Activated CD4-positive, alpha-beta memory T cell treated with anti-CD3 and anti-CD28 coated beads for 36 hours (primary cell): ENCODE measurements at regions of chr4 and their contacts with region 1.

Region 1: DNA sequence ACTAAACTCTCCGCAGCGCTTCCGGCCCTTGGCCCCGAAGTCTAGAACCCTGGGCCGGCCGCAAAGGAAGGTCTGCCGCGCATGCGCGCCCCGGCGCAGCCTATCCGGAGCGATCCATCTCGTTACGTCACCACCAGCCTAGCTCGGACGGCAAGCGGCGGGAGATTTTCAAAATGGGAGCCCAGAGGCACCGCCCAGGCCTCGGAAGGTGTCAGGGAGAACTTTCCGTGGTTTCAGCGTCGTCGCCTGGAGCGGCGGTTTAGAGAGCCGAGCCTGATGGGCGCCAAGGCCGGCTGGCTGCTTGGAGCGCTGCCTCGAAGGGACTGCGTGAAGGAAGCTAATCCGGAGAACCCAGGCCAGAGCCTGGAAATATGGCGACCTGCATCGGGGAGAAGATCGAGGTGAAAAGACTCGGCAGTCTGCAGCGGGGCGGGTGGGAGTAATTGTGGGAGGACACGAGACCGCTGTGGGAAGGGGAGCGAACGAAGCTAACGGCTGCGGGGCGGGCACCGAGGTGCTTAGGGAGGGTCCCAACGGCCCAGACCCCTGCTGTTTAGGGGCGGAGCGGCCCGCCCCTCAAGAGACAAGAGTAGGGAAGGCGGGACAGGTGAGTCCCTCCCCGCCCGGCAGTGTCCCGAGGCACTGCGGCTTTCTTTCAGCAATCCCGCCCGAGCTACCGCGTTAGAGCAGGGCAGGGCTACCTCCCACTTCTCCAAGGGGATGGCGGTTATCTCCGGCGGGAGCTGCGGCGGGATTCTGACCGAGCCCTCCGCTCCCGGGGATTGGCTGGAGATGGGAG is at the start of gene PLK4:
- DNase-seq: peak; percentile 97
- H3K4me3 Mint-ChIP-seq: peak within 1 kb of the TSS; percentile 95
- H3K27ac Mint-ChIP-seq: peak within 1 kb of the TSS; percentile 98
- H3K4me1 Mint-ChIP-seq: peaks cover 14% of the 10 kb centered on the region
- H3K27me3 Mint-ChIP-seq: peaks cover 2% of the 10 kb centered on the region
- total RNA-seq, gene PLK4: 43.5 to 45.6 TPM

Region 2: GRCh38 chr4:127622921-127623656 is 257.9 kb before region 1 on chr4:
- CTCF ChIA-PET with region 1: no interaction called
- POLR2A ChIA-PET with region 1: no interaction called
- intact Hi-C with region 1: loop called (anchors 10 kb)
- DNase-seq: no peak
- H3K4me3 Mint-ChIP-seq: peak overlapping the region; percentile 12
- H3K27ac Mint-ChIP-seq: no peak overlapping the region
- H3K4me1 Mint-ChIP-seq: peaks cover 8% of the 10 kb centered on the region
- H3K27me3 Mint-ChIP-seq: peaks cover 40% of the 10 kb centered on the region

Region 3: DNA sequence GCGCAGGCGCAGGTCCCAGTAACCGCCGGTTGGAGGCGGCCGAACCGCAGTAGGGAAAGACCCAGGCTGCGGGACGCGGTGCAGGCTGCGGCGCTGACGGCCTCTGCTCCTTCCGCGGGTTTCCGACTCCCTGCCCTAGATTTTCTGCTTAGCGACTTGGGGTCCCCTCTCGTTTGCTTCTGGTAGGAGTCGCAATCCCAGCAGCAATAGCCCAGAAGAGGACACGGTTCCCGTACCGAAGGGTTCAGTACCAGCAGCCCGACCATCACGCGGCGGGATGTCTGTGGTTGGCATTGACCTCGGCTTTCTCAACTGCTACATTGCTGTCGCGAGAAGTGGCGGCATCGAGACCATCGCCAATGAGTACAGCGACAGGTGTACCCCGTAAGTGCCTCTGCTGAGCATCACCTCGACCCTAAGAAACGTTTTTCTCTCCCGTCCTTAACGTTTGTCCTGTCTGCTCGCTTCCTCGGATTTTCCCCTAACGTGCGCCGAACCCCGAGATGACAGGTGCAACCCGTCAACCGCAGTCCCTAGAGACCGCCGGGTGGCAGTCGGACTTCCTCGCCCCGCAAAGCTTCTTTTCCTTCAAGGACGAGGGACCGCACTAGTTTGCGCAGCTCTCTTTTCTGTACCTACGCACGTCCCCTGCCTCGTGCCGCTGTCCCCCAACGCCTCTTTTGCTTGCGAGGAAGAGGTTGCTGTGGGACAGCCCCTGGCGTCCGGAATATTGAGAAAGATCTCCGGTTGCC is 98.5 kb before region 1 on chr4 and contains the start of gene HSPA4L:
- CTCF ChIA-PET with region 1: no interaction called
- POLR2A ChIA-PET with region 1: no interaction called
- intact Hi-C with region 1: loop called (anchors 1 kb)
- DNase-seq: no peak
- H3K4me3 Mint-ChIP-seq: peak within 1 kb of the TSS; percentile 79
- H3K27ac Mint-ChIP-seq: peak within 1 kb of the TSS; percentile 49
- H3K4me1 Mint-ChIP-seq: peaks cover 18% of the 10 kb centered on the region
- H3K27me3 Mint-ChIP-seq: peaks cover 51% of the 10 kb centered on the region
- total RNA-seq, gene HSPA4L: 1.9 to 3.0 TPM

Region 4: DNA sequence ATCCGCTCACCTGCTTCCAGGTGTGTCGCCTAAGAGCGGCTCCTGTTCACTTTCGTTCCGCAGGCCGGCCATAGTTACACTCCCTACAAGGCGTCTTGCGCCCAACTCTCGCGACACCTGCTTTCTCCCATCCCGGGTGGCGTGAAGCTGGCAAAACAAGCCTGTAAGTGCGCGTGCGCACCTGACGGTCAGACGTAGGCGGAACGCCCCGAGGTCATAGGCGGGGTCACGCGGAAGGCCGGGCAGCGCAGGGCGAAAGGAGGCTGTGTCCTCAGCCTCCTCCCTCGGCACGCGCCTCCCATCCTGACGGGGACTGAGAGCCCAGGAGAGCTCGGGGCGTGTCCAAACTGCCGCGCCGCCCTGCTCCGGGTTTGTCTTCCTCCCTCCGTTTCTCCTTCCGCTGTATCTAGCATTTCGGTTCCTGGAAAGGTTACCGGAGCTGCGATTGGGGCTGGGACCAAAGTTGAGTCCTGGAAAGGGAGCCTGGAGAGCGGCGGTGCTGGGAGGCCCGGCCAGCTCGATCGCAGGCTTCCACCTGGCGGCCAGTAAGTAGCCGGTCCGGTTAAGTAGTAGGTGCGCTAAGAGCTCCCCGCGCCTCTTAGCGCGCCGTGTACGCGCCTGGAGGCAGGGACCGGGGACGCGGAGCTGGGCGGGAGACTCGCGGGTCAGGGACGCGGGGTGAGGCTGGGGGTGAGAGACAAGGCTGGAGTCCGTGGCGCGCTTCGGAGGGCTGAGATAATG is 84.3 kb after region 1 on chr4 and contains the starts of genes ABHD18 and MFSD8:
- CTCF ChIA-PET with region 1: interaction called, 4 read pairs
- POLR2A ChIA-PET with region 1: interaction called, 20 read pairs
- intact Hi-C with region 1: loop called (anchors 1 kb)
- DNase-seq: peak; percentile 100
- H3K4me3 Mint-ChIP-seq: peak within 1 kb of the TSS; percentile 94
- H3K27ac Mint-ChIP-seq: peak within 1 kb of the TSS; percentile 95
- H3K4me1 Mint-ChIP-seq: peaks cover 38% of the 10 kb centered on the region
- H3K27me3 Mint-ChIP-seq: no peaks in the 10 kb centered on the region
- total RNA-seq, gene ABHD18: 17.3 to 18.9 TPM
- total RNA-seq, gene MFSD8: 13.0 to 15.3 TPM

Region 5: GRCh38 chr4:127997534-127998388 is 116.8 kb after region 1 on chr4:
- CTCF ChIA-PET with region 1: no interaction called
- POLR2A ChIA-PET with region 1: no interaction called
- intact Hi-C with region 1: loop called (anchors 1 kb)
- DNase-seq: peak; percentile 60
- H3K4me3 Mint-ChIP-seq: no peak overlapping the region
- H3K27ac Mint-ChIP-seq: peak overlapping the region; percentile 36
- H3K4me1 Mint-ChIP-seq: peaks cover 22% of the 10 kb centered on the region
- H3K27me3 Mint-ChIP-seq: no peaks in the 10 kb centered on the region

Region 6: DNA sequence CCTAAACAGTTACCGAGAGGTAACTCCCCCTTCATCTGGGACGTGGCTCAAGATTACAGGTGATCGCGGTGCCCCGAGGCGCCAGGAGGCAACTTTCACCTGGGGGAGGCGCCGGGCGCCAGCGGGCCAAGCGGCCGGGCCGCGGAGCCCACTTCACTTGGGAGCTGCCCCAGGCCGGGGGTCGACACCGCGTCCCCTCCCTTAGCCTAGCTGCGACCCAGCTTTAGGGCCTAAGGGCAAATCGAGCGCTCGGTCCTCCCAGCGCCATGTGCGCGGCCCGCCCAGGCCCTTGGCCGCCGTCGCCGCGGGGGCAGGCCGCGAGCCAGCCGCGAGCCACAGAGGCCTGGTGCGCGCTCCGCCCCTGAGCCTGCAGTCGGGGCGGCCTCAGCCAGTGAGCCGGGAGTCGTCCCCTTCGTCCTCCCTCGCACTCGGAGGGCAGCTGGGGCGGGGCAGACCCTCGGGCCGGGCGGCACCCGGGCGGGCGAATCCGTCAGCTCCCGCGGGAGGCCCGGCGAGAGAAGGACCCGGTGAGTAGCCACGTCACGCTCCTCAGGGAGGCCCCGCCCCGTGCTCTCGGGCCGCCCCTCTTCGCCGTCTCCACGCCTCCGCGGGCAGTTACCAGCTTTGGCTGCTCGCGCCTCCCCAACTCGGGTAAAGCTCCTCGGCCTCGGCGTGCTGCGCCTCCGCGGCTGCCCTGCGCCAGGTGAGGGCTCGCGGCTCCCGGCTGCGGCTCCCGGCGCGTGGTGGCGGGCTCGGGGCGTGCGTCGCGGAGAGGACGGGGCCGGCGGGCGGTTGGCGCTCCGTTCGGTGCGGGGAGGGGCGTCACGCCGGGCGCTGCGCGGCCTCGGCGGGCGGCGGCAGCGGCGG is 180.0 kb after region 1 on chr4 and contains the start of gene LARP1B:
- CTCF ChIA-PET with region 1: no interaction called
- POLR2A ChIA-PET with region 1: interaction called, 10 read pairs
- intact Hi-C with region 1: loop called (anchors 1 kb)
- DNase-seq: peak; percentile 95
- H3K4me3 Mint-ChIP-seq: peak within 1 kb of the TSS; percentile 87
- H3K27ac Mint-ChIP-seq: peak within 1 kb of the TSS; percentile 87
- H3K4me1 Mint-ChIP-seq: peaks cover 15% of the 10 kb centered on the region
- H3K27me3 Mint-ChIP-seq: no peaks in the 10 kb centered on the region
- total RNA-seq, gene LARP1B: 23.5 to 25.5 TPM